Head of caudate nucleus (tissue), 42 donors: ENCODE measurements at regions of chr5 and their contacts with region 1.

Region 1: DNA sequence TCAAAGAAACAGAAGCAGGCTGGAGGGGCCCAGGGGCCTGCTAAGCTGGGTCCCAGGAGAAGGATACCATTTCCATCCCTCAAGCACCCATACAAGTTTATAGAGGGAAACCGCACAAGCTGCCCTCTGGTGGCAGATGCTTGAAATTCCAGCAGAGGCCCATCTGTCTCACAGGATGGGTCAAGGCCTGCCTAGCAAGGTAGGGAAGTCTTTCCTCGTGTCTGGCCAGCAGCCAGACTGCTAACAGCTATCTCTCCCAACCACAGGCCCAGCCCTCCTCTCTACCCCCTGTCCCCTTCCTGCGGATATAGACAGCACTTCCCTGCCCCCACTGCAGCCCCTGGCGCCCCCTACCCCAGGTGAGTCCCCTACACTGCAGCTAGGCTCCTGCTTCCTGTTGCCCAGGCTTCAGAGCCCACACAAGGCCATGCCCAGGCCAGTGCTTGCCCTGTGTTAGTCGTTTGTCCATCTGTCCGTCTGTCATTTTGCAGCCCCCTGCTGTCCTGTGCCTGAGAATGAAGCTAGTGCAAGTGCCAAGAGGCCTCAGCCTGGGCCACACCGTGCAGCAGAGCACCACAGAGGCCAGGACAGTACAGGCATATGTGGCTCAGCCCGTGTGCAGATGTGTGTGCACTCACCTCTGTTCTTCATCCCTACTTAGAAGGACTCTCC is 26.2 kb downstream of the TCF7 start:
- DNase-seq: peak in 40 of 42 donors; percentile 39 to 85 (median 70)

Region 2: GRCh38 chr5:134041570-134042411 is 98.9 kb before region 1 on chr5:
- intact Hi-C with region 1: loop called (anchors 5 kb)
- DNase-seq: no peak